ENCODE measurements at regions of chr9 and their contacts with region 1.

Region 1: DNA sequence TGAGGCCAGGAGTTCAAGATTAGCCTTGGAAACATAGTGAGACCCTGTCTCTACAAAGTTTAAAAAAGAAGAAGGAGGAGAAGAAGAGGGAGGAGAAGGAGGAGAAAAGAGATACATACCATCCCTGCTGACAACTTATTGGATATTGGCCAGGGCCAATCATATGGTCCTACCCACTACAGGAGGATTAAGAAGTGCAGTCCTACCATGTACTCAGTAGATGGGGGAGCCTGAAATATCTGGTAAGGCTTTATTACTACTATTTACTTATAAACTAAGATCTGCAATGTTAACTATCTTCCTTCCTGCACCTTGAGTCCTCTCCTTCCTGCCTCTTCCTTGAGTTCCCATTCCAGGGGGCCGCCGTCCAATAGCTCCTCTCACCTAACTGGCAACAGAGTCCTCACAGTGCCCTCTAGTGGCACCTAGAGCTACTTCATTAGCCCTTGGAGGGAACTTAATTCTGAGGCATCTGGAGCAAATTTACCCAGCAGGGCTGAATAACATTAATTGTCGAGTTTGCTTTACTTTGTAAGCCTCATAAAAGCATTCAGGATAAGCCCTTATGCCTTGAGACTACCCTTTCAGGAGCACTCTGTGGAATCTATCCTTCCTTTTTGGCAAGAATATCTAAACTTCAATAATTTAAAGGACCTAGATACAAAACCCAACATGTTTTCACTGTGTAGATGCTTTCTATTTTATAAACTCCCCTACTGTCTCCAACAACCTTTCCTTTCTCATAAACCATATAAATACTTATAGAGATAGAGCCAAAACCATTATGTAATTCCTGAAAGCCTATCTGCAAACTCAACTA is 39.1 kb upstream of the RANBP6 start:
- DNase-seq: peak; percentile 63
- H3K4me3 ChIP-seq: no peak overlapping the region
- H3K27ac ChIP-seq: no peak overlapping the region
- H3K4me1 ChIP-seq: no peaks in the 10 kb centered on the region
- H3K27me3 ChIP-seq: no peaks in the 10 kb centered on the region
- CTCF ChIP-seq: peak; percentile 80

Region 2: GRCh38 chr9:5886114-5886939 is 168.2 kb before region 1 on chr9:
- intact Hi-C with region 1: loop called (anchors 5 kb)
- DNase-seq: peak; percentile 74
- H3K4me3 ChIP-seq: no peak overlapping the region
- H3K27ac ChIP-seq: no peak overlapping the region
- H3K4me1 ChIP-seq: no peaks in the 10 kb centered on the region
- H3K27me3 ChIP-seq: no peaks in the 10 kb centered on the region
- CTCF ChIP-seq: peak; percentile 90

Measured in colonic mucosa (tissue), 4 donors.